CD4-positive, alpha-beta memory T cell (primary cell): ENCODE measurements at regions of chr1 and their contacts with region 1.

Region 1: GRCh38 chr1:41936118-41936517 is 17.4 kb upstream of the HIVEP3 start:
- DNase-seq: no peak
- H3K4me3 ChIP-seq: no peak overlapping the region
- H3K4me3 Mint-ChIP-seq: no peak overlapping the region
- H3K27ac ChIP-seq: no peak overlapping the region
- H3K27ac Mint-ChIP-seq: no peak overlapping the region
- H3K4me1 ChIP-seq: no peaks in the 10 kb centered on the region
- H3K4me1 Mint-ChIP-seq: peaks cover 0 to 12% (median 6%) of the 10 kb centered on the region in 4 donors
- H3K27me3 ChIP-seq: no peaks in the 10 kb centered on the region
- H3K27me3 Mint-ChIP-seq: no peaks in the 10 kb centered on the region

Region 2: DNA sequence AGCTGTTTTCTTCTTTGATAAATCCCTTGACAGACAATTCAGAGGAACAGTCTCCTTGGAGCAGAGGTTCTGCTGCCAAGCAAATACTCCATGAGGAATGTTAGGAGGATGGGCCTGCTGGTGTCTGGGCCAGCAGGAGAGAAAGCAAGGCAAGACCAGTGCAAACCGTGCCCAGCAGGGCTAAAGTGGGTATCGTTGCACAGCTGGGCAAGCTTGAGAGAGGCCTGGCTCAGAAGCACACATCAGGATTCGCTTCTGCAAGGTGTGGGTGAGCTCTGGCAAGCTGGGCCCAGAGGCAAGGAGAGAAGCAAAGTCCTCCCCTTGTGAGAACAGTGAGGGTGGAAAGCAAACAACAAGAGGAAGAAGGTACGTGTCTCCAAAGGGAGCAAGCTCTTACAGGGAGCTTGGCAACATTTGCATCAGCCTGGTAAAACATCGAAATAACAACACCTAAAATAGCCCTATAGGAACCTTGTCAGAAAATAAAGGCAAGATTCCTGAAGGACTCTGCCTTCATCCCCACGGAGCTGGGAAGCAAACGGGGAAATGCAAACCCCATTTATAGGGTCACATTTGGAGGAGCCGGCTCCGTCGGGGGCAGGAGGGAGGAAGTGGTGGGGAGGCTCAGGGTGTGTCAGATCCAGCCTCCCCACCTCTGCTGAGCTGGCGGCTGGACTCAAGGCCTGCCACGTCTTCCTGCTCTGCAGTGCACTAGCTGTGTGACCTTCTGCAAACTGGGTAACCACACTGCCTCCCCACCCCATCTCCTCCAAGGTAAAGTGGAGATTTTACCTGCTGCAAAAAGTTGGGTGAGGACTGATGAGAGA is 44.9 kb after region 1 on chr1:
- CTCF ChIA-PET with region 1: no interaction called
- POLR2A ChIA-PET with region 1: no interaction called
- intact Hi-C with region 1: loop called (anchors 10 kb)
- DNase-seq: peak in 1 of 5 donors; percentile 7
- H3K4me3 ChIP-seq: no peak overlapping the region
- H3K4me3 Mint-ChIP-seq: peak overlapping the region; percentile 15 to 69 (median 58)
- H3K27ac ChIP-seq: no peak overlapping the region
- H3K27ac Mint-ChIP-seq: peak overlapping the region in 4 of 7 donors; percentile 16 to 80 (median 74)
- H3K4me1 ChIP-seq: peaks cover 17% of the 10 kb centered on the region
- H3K4me1 Mint-ChIP-seq: peaks cover 21 to 30% (median 26%) of the 10 kb centered on the region in 4 donors
- H3K27me3 ChIP-seq: no peaks in the 10 kb centered on the region
- H3K27me3 Mint-ChIP-seq: no peaks in the 10 kb centered on the region